GM12878 (cell line): ENCODE measurements at regions of chr10 and their contacts with region 1.

Region 1: GRCh38 chr10:24685958-24686540 is 37.6 kb downstream of the ARHGAP21 start:
- DNase-seq: no peak
- ATAC-seq: no peak
- H3K4me3 ChIP-seq: no peak overlapping the region
- H3K27ac ChIP-seq: no peak overlapping the region
- H3K4me1 ChIP-seq: no peaks in the 10 kb centered on the region
- H3K27me3 ChIP-seq: no peaks in the 10 kb centered on the region
- CTCF ChIP-seq: no peak
- EP300 ChIP-seq: no peak
- POLR2A ChIP-seq: no peak
- RAD21 ChIP-seq: no peak

Region 2: GRCh38 chr10:24569828-24570657 is 116.0 kb before region 1 on chr10:
- CTCF ChIA-PET with region 1: no interaction called
- POLR2A ChIA-PET with region 1: interaction called, 10 read pairs
- RAD21 ChIA-PET with region 1: no interaction called
- SMC1A ChIA-PET with region 1: no interaction called
- in situ Hi-C with region 1: no loop called
- intact Hi-C with region 1: no loop called
- DNase-seq: no peak
- ATAC-seq: no peak
- H3K4me3 ChIP-seq: no peak overlapping the region
- H3K27ac ChIP-seq: no peak overlapping the region
- H3K4me1 ChIP-seq: no peaks in the 10 kb centered on the region
- H3K27me3 ChIP-seq: no peaks in the 10 kb centered on the region
- CTCF ChIP-seq: no peak
- EP300 ChIP-seq: no peak
- POLR2A ChIP-seq: no peak
- RAD21 ChIP-seq: no peak

Region 3: DNA sequence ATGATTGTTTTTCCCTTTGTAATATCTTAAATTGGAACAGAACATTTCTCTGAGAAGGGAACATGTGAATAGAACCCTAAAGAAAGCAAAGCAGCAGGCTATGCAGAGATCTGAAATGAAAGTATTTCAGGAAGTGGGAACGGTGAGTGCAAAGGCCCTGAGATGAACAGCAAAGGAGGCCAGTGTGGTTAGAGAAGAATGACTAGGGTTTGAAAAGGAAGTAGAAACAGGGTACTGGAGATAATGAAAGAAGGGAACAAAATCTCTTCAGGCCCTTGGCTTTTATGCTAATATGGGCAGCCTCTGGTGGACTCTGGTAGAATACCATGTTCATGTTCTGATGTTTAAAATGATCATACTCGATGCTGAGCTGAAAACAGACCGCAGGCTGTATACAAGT is 15.4 kb after region 1 on chr10:
- CTCF ChIA-PET with region 1: interaction called, 5 read pairs
- POLR2A ChIA-PET with region 1: interaction called, 16 read pairs
- RAD21 ChIA-PET with region 1: interaction called, 3 read pairs
- SMC1A ChIA-PET with region 1: interaction called, 40 read pairs
- in situ Hi-C with region 1: no loop called
- intact Hi-C with region 1: no loop called
- DNase-seq: peak; percentile 55
- ATAC-seq: peak; percentile 90
- H3K4me3 ChIP-seq: 0 out of 2 replicates have a peak overlapping the region, but pooled peaks have one; percentile 0
- H3K27ac ChIP-seq: no peak overlapping the region; the same call in 1 of the 2 replicates
- H3K4me1 ChIP-seq: peaks cover 6% of the 10 kb centered on the region
- H3K27me3 ChIP-seq: no peaks in the 10 kb centered on the region
- CTCF ChIP-seq: 0 out of 6 replicates have a peak, but pooled peaks of 2 of the 3 experiments have one; percentile 8 to 10
- EP300 ChIP-seq: no peak
- POLR2A ChIP-seq: no peak
- RAD21 ChIP-seq: no peak